Mammary epithelial cell (primary cell): ENCODE measurements at regions of chr18 and their contacts with region 1.

Region 1: GRCh38 chr18:61322265-61322873 is 10.9 kb upstream of the CDH20 start:
- DNase-seq: peak; percentile 35
- H3K4me3 ChIP-seq: no peak overlapping the region
- H3K27ac ChIP-seq: no peak overlapping the region
- H3K4me1 ChIP-seq: no peaks in the 10 kb centered on the region
- H3K27me3 ChIP-seq: no peaks in the 10 kb centered on the region
- CTCF ChIP-seq: peak; percentile 87 to 97

Region 2: DNA sequence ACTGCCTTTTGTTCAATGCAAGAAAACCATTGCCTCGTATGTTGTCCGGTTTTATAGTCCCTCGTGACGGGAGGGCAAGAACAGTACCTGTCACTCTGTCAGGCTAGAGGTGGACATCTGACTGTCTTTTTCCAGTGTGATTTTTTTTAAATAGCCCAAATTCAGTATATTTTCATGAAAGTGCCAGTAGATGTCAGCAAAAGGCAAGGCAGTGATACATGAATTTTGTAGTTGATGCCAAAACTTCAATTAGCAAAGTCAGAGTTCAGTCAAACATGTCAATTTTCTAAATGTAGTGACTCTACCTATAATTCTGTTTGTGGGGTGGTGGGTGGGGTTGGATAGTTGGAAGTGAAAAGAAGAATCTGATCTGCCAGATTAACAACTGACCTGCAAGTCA is 653.8 kb before region 1 on chr18:
- CTCF ChIA-PET with region 1: no interaction called
- dilution Hi-C with region 1: no loop called
- in situ Hi-C with region 1: no loop called
- intact Hi-C with region 1: loop called (anchors 2 kb)
- DNase-seq: no peak
- H3K4me3 ChIP-seq: no peak overlapping the region
- H3K27ac ChIP-seq: no peak overlapping the region
- H3K4me1 ChIP-seq: peaks cover 7% of the 10 kb centered on the region
- H3K27me3 ChIP-seq: peaks cover 2% of the 10 kb centered on the region
- CTCF ChIP-seq: peak in 1 of 2 donors; percentile 38

Region 3: GRCh38 chr18:61496374-61496773 is 174.0 kb after region 1 on chr18:
- CTCF ChIA-PET with region 1: no interaction called
- dilution Hi-C with region 1: no loop called
- in situ Hi-C with region 1: loop called (anchors 10 kb)
- intact Hi-C with region 1: no loop called
- DNase-seq: no peak
- H3K4me3 ChIP-seq: no peak overlapping the region
- H3K27ac ChIP-seq: no peak overlapping the region
- H3K4me1 ChIP-seq: no peaks in the 10 kb centered on the region
- H3K27me3 ChIP-seq: no peaks in the 10 kb centered on the region
- CTCF ChIP-seq: no peak

Region 4: GRCh38 chr18:61502472-61502871 is 180.1 kb after region 1 on chr18:
- CTCF ChIA-PET with region 1: interaction called, 9 read pairs
- dilution Hi-C with region 1: no loop called
- in situ Hi-C with region 1: loop called (anchors 10 kb)
- intact Hi-C with region 1: loop called (anchors 1 kb)
- DNase-seq: peak; percentile 32
- H3K4me3 ChIP-seq: no peak overlapping the region
- H3K27ac ChIP-seq: no peak overlapping the region
- H3K4me1 ChIP-seq: no peaks in the 10 kb centered on the region
- H3K27me3 ChIP-seq: no peaks in the 10 kb centered on the region
- CTCF ChIP-seq: peak; percentile 64 to 79